Activated CD8-positive, alpha-beta T cell treated with anti-CD3 and anti-CD28 coated beads, Interleukin-2, amount 10 ng/mL, durations not matched to agents 7 days and 5 days (primary cell): ENCODE measurements at regions of chr16 and their contacts with region 1.

Region 1: GRCh38 chr16:30813821-30814189 is 26.8 kb upstream of the ZNF629 start:
- DNase-seq: no peak
- ATAC-seq: peak; percentile 2
- H3K4me3 Mint-ChIP-seq: peak overlapping the region; percentile 83
- H3K27ac Mint-ChIP-seq: peak overlapping the region; percentile 89
- H3K4me1 Mint-ChIP-seq: peaks cover 15% of the 10 kb centered on the region
- H3K27me3 Mint-ChIP-seq: peaks cover 4% of the 10 kb centered on the region

Region 2: GRCh38 chr16:30703971-30704370 is 109.8 kb before region 1 on chr16:
- CTCF ChIA-PET with region 1: no interaction called
- POLR2A ChIA-PET with region 1: no interaction called
- DNase-seq: no peak
- ATAC-seq: no peak
- H3K4me3 Mint-ChIP-seq: no peak overlapping the region
- H3K27ac Mint-ChIP-seq: no peak overlapping the region
- H3K4me1 Mint-ChIP-seq: peaks cover 22% of the 10 kb centered on the region
- H3K27me3 Mint-ChIP-seq: no peaks in the 10 kb centered on the region

Region 3: DNA sequence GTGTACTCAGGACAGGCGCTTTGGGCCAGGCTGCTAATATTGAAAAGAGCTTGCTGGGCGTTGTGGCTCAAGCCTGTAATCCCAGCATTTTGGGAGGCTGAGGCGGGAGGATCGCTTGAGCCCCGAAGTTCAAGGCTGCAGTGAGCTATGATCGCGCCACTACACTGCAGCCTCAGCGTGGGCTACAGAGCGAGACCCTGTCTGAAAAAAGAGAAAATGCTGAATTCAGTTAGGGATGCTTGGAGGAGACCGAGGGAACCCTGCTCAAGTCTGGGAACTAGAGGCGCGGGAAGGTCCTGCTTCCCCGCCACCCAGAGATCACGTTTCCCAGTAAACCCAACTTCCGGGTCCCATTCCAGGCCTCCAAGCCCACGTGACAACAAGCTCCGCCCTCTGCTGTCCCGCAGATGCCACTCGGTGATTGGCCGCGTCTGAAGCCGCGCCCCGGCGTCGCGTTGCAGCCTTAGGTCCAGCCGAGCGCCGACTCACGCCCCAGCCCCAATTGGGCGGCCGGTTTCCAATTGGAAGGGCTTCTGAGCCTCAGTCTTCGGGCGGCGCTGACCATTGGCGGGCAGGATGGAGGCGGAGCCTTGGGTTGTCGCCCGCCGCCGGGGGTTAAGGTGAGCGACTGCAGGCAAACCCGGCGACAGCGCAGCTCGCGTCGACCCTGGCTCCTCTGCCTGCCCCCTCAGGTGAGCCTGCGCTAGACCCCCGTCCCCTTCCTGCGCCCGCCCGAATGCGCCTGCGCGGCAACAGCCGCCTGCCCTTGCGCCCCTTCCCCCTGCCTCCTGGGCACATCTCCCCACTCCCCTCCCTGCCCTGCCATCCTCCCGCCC is 65.8 kb before region 1 on chr16 and contains the start of gene PHKG2:
- CTCF ChIA-PET with region 1: interaction called, 15 read pairs
- POLR2A ChIA-PET with region 1: interaction called, 9 read pairs
- DNase-seq: peak; percentile 99
- ATAC-seq: peak; percentile 99
- H3K4me3 Mint-ChIP-seq: peak within 1 kb of the TSS; percentile 92
- H3K27ac Mint-ChIP-seq: peak within 1 kb of the TSS; percentile 86
- H3K4me1 Mint-ChIP-seq: peaks cover 27% of the 10 kb centered on the region
- H3K27me3 Mint-ChIP-seq: no peaks in the 10 kb centered on the region
- total RNA-seq, gene PHKG2: 42.1 to 43.7 TPM

Region 4: DNA sequence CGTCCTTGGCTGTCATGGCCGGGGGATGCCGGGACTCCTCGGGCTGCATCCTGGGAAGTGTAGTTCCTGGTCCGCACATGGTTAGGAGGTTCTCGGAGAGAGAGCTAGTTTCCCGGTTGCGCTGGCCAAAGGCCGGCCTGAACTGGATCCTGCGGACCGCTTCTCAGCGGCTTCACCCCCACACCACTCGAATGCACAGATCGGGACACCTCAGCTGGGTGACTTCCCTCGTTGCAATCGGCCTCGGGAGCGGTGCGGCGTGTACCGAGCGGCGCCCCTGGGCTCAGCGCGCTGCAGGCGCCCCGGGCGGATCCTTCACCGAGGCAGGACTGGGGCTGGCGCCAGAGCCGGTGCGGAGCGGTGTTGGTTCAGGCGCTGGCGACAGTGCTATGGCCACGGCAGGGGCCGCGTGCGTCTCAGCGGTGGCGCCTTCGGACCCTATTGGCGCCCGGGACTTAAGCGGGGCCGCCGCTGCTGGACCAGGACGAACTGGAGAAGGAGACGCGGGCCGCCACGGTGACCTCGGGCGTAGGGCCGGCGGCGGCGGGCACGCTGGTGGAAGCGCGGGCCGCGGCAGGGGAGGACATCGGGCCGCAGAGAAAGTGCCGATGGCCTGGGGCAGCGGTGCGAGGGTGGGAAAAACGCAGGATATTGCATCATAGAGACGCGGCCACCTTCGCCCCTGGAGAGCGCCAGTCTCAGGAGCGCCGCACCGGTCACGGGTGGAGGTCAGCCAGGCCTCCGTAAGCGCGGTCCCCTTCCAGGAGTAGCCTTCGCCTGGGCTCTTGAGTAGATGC is 38.2 kb before region 1 on chr16:
- CTCF ChIA-PET with region 1: interaction called, 12 read pairs
- POLR2A ChIA-PET with region 1: no interaction called
- DNase-seq: peak; percentile 75
- ATAC-seq: peak; percentile 77
- H3K4me3 Mint-ChIP-seq: peak overlapping the region; percentile 92
- H3K27ac Mint-ChIP-seq: peak overlapping the region; percentile 95
- H3K4me1 Mint-ChIP-seq: peaks cover 37% of the 10 kb centered on the region
- H3K27me3 Mint-ChIP-seq: no peaks in the 10 kb centered on the region

Region 5: DNA sequence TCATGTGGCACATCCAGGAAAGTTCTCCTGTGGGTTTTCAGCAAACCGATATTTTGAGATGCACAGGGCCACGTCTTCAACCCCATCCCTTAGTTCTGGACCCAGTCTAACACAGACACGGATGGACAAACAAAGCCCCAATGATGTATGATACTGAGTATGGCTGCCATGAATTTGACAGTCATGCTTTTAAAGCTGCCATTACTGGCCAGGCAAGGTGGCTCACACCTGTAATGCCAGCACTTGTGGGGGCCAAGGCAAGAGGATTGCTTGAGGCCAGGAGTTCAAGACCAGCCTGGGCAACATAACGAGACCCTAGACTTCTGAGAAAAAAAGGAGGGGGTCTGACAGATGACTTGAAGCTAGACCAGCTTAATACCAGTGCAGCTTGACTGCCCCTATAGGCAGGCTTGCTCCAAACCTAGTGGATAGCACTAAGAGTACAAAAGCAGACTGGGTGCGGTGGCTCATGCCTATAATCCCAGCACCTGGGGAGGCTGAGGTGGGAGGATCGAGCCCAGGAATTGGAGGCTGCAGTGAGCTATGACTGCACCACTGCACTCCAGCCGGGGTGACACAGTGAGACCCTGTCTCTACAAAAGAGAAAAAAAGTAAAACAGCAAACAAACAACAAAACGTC is 16.0 kb before region 1 on chr16:
- CTCF ChIA-PET with region 1: interaction called, 15 read pairs
- POLR2A ChIA-PET with region 1: interaction called, 3 read pairs
- DNase-seq: no peak
- ATAC-seq: peak; percentile 60
- H3K4me3 Mint-ChIP-seq: no peak overlapping the region
- H3K27ac Mint-ChIP-seq: no peak overlapping the region
- H3K4me1 Mint-ChIP-seq: peaks cover 7% of the 10 kb centered on the region
- H3K27me3 Mint-ChIP-seq: peaks cover 2% of the 10 kb centered on the region